Activated B cell treated with CpG ODN at 0.5 μM for 24 hours (primary cell): ENCODE measurements at regions of chr2 and their contacts with region 1.

Region 1: GRCh38 chr2:86747711-86748639 is 27.9 kb downstream of the RMND5A start:
- DNase-seq: no peak
- ATAC-seq: peak; percentile 88
- H3K4me3 Mint-ChIP-seq: peak overlapping the region; percentile 44
- H3K27ac Mint-ChIP-seq: peak overlapping the region; percentile 85
- H3K4me1 Mint-ChIP-seq: peaks cover 46% of the 10 kb centered on the region
- H3K27me3 Mint-ChIP-seq: no peaks in the 10 kb centered on the region
- CTCF ChIP-seq: no peak

Region 2: GRCh38 chr2:84849271-84849952 is 1898.6 kb before region 1 on chr2:
- CTCF ChIA-PET with region 1: no interaction called
- POLR2A ChIA-PET with region 1: no interaction called
- intact Hi-C with region 1: no loop called
- DNase-seq: no peak
- ATAC-seq: no peak
- H3K4me3 Mint-ChIP-seq: no peak overlapping the region
- H3K27ac Mint-ChIP-seq: no peak overlapping the region
- H3K4me1 Mint-ChIP-seq: peaks cover 32% of the 10 kb centered on the region
- H3K27me3 Mint-ChIP-seq: no peaks in the 10 kb centered on the region
- CTCF ChIP-seq: no peak

Region 3: DNA sequence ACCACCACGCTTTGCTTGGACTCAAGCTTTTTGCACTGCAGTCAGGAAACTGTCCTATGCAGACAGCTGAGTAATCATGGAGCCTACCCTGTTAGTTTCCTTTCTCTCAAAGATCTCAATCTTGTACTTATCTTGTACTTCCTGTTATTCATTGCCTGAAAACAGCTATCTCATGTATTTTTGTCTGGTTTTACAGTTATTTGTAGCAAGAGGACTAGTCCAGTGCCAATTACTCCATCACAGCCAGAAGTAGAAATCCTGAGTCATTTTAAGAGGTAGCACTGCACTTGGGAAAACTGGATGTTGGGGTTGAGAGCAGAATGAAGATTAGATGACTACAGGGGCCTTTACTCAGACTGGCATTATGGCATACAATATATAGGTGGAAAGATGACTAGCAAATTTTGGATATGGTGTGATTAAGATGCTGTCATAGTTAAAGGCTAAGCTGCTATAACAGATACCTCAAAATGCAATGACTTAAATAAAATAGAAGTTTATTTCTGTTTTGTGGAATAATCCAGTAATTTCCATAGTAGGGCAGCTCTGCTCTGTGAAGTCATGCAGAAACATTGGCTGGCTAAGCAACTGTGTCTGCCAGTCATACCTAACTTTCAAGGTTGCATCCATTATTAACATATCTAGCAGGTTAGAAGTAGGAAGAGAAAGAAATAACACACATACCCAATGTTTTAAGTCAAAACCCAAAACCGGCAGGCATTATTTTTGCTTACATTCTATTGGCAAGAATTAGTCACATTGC is 163.6 kb before region 1 on chr2:
- CTCF ChIA-PET with region 1: no interaction called
- POLR2A ChIA-PET with region 1: no interaction called
- intact Hi-C with region 1: no loop called
- DNase-seq: no peak
- ATAC-seq: no peak
- H3K4me3 Mint-ChIP-seq: no peak overlapping the region
- H3K27ac Mint-ChIP-seq: no peak overlapping the region
- H3K4me1 Mint-ChIP-seq: peaks cover 3% of the 10 kb centered on the region
- H3K27me3 Mint-ChIP-seq: no peaks in the 10 kb centered on the region
- CTCF ChIP-seq: no peak

Region 4: GRCh38 chr2:86623651-86624541 is 124.1 kb before region 1 on chr2 and contains the start of gene RNF103:
- CTCF ChIA-PET with region 1: no interaction called
- POLR2A ChIA-PET with region 1: interaction called, 6 read pairs
- intact Hi-C with region 1: loop called (anchors 10 kb)
- DNase-seq: peak; percentile 98
- ATAC-seq: peak; percentile 86
- H3K4me3 Mint-ChIP-seq: peak within 1 kb of the TSS; percentile 94
- H3K27ac Mint-ChIP-seq: peak within 1 kb of the TSS; percentile 96
- H3K4me1 Mint-ChIP-seq: peaks cover 35% of the 10 kb centered on the region
- H3K27me3 Mint-ChIP-seq: no peaks in the 10 kb centered on the region
- CTCF ChIP-seq: no peak
- total RNA-seq, gene RNF103: 18.6 and 22.2 TPM in 2 replicates

Region 5: DNA sequence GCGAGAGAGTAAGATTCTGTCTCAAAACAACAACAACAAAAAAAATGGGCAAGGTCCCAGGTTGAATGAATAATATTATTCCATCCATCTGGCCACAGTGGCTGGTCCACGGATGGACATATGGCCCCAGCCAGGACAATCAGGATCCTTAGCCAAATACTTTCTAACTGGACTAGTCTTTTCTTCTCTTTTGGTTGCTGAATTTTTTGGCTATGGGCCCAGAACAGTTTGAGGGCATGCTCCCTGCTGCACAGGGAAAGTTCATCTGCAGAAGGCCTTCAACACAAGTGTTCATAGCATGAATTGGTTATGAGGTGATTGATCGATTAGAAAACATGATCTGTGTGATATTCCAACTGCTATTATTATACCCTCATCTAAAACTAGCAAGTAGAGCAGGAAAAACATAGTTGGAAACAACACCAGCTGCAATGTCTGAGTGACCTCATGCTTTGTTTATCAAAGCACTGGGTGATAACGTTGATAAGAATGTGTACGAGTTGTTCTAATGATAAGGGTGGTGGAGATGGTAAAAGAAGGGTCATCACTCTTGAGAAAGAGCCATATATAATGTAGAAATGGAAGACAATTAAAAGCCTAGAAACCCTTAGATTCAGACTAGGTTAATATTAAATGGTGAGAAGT is 76.5 kb before region 1 on chr2:
- CTCF ChIA-PET with region 1: no interaction called
- POLR2A ChIA-PET with region 1: no interaction called
- intact Hi-C with region 1: no loop called
- DNase-seq: no peak
- ATAC-seq: no peak
- H3K4me3 Mint-ChIP-seq: no peak overlapping the region
- H3K27ac Mint-ChIP-seq: no peak overlapping the region
- H3K4me1 Mint-ChIP-seq: no peaks in the 10 kb centered on the region
- H3K27me3 Mint-ChIP-seq: no peaks in the 10 kb centered on the region
- CTCF ChIP-seq: no peak

Region 6: GRCh38 chr2:86695053-86695691 is 52.8 kb before region 1 on chr2:
- CTCF ChIA-PET with region 1: no interaction called
- POLR2A ChIA-PET with region 1: no interaction called
- intact Hi-C with region 1: no loop called
- DNase-seq: no peak
- ATAC-seq: no peak
- H3K4me3 Mint-ChIP-seq: no peak overlapping the region
- H3K27ac Mint-ChIP-seq: no peak overlapping the region
- H3K4me1 Mint-ChIP-seq: peaks cover 6% of the 10 kb centered on the region
- H3K27me3 Mint-ChIP-seq: no peaks in the 10 kb centered on the region
- CTCF ChIP-seq: no peak